Right ventricle myocardium inferior (tissue), 1 donor: ENCODE measurements at regions of chr15 and their contacts with region 1.

Region 1: GRCh38 chr15:99104788-99105513 is at the start of gene SYNM:
- DNase-seq: peak; percentile 86
- ATAC-seq: peak; percentile 87
- total RNA-seq, gene SYNM: 311 TPM

Region 2: DNA sequence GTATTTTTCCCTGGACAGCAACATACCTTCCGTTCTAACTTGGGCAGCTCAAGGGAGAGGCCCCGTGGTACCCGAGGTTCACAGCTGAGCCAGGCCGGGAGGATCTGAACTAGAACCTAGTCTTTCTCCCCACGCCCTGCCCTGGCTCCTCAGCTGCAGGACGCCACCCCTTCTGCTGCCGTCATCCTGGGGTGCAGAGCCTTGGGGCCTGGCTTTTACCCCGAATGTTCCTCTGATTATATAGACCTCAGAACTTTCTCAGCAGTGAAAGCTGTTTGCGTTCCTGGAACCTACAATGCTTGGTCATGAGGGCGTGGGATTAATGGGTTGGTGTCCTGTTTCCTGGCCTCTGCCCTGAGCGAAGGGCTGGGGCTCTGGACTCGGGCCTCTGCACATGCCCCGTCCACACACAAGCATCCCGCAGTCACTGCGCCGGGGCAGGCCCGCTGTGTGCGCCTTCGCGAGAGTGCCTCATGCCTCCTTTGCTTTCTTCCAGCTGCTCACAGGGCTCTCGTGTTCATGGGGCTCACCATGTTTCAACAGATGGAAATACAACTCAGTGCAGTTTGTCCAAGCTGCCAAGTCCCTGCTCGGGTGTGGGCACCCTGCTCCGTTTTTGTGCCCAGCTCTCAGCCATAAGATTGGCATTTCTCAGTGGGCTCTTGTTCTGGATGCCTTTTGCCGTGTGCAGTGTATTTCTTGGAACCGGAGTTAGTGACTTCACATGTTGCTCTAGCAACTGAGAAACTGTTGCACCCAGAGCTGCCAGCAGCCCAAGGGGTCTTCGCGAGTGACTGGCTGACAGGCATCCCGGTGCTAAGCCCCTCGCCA is 20.3 kb after region 1 on chr15:
- intact Hi-C with region 1: no loop called
- DNase-seq: no peak
- ATAC-seq: no peak

Region 3: GRCh38 chr15:99143655-99144610 is 39.0 kb after region 1 on chr15:
- intact Hi-C with region 1: loop called (anchors 2 kb)
- DNase-seq: peak; percentile 80
- ATAC-seq: peak; percentile 89

Region 4: DNA sequence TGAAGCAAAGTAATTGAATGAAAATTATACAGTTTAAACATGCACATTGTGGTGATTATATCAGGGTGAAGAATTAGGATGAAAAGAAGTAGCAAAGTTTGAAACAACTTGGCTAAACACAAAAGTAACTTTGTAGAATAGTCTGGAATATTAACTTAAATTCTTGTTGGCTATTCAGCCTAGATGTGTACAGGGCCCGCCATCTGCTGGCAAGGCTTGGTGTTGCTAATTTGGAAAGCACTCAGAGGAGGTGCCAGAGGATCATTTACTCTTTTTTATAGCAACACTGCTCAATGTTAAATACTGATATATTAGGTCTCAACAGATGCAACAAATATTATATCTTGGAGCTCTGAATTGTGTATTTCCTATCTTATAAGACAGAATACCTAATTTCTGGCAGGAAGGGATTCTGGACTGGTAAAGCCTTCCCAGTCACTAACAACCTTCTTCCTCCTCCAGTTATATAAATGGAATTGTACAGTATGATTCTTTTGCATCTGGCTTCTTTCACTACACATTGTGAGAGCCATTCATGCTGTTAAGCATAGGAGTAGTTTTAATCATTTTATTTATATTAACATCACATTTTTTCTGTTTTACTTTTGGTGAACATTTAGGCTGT is 108.3 kb after region 1 on chr15:
- intact Hi-C with region 1: loop called (anchors 1 kb)
- DNase-seq: peak; percentile 89
- ATAC-seq: peak; percentile 74

Region 5: DNA sequence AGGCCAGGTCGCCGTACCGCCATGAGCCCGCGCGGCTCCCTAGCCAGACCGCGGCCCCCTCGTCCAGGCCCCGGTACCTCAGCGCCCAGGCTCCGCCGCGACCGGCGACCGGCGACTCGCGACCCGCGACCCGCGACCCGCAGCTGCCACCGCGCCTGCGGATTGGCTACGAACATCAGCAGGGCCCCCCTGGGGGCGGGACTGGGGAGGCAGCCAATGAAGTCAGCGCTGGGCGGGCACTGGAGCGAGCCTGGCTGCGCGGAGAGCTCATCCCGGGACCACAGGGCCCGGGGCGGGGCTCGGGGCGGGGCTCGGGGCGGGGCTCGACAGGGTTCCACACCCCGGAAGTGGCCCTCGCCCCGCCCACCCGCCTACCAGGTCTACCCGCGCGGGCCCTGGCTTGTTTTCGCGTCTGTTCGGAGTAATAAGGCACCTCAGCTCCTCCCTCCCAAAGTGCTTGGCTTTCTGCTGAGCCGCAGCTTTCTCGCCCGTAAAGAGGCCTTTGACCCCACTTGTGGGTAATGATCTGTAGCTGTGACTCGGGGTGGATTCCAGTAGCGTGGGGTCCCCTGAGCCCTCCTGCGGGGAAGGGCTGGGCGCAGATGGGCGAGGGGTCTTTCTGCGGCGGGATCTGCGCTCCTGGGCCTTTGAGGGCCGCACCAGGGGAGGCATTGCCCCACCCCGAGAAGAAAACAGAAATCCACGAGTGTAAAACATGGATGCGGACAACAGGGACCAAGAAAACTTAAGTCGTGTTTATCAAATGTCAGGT is 628.5 kb after region 1 on chr15 and contains the start of gene LYSMD4:
- intact Hi-C with region 1: loop called (anchors 10 kb)
- DNase-seq: peak; percentile 99
- ATAC-seq: peak; percentile 99
- total RNA-seq, gene LYSMD4: 9.3 TPM